MCF 10A (cell line): ENCODE measurements at regions of chr20 and their contacts with region 1.

Region 1: GRCh38 chr20:38985603-38986170 is 23.5 kb downstream of the DHX35 start:
- DNase-seq: peak; percentile 6
- H3K4me3 Mint-ChIP-seq: no peak overlapping the region
- H3K27ac Mint-ChIP-seq: peak overlapping the region; percentile 59
- H3K4me1 Mint-ChIP-seq: peaks cover 15% of the 10 kb centered on the region
- H3K27me3 Mint-ChIP-seq: no peaks in the 10 kb centered on the region
- CTCF ChIP-seq: no peak

Region 2: DNA sequence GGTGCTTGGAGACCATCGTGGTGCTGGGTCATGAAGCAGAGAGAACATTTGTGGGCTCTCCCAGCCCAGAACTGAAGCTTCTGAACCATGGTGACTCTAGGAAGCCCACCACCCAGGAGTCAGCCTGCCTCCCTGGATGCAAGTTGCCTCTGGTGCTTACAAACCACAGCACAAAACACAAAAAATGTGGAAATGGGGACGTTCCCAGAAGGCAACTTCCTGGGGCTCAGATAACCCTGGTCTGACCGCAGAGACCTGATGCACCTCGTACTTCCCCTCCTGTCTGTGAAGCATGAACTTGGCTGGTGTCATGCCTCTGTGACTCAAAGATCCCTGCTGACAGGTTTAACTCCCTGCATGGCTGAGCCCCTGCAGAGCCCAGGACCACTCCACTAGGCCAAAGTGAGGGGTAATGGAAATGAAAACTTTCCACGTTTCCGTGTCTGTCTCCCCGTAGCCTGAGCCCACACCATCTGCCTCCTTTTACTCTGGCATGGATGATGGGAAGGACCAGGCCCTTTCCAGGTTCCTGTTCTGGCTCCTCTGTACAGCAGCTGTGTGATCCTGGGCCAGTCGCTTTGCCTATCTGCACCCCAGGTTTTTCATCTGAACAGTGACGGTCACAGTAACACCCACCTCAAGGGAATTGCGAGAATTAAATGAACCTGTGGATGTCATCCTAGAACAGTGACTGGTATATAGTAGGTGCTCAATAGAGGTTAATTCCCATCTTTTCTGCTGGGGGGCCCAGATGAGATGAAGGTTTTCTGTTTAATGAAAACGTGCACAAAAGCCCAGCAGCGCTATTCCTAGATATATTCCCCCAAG is 122.4 kb before region 1 on chr20:
- CTCF ChIA-PET with region 1: no interaction called
- POLR2A ChIA-PET with region 1: no interaction called
- intact Hi-C with region 1: no loop called
- DNase-seq: no peak
- H3K4me3 Mint-ChIP-seq: no peak overlapping the region
- H3K27ac Mint-ChIP-seq: no peak overlapping the region
- H3K4me1 Mint-ChIP-seq: no peaks in the 10 kb centered on the region
- H3K27me3 Mint-ChIP-seq: no peaks in the 10 kb centered on the region
- CTCF ChIP-seq: no peak

Region 3: DNA sequence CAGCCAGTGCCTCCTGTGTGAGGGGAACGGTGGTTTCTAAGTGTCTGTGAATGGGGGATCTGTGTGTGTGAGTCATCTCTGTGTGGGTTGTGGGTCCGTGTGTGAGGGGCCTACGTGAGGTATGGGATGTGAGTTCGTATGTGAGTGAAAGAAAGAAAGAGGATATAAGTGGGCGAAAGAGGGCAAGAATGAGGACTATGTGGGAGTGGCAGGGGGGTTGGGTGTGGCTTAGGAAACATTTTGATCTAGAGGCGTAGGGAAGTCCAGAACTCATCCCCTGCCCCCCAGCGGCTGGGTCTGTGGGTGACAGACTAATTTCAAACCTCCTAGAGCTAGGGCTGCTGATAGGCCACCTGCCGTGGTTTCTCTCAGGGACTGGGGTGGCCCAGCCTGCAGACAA is 11.9 kb after region 1 on chr20:
- CTCF ChIA-PET with region 1: interaction called, 3 read pairs
- POLR2A ChIA-PET with region 1: interaction called, 13 read pairs
- intact Hi-C with region 1: no loop called
- DNase-seq: no peak
- H3K4me3 Mint-ChIP-seq: no peak overlapping the region
- H3K27ac Mint-ChIP-seq: no peak overlapping the region
- H3K4me1 Mint-ChIP-seq: peaks cover 5% of the 10 kb centered on the region
- H3K27me3 Mint-ChIP-seq: no peaks in the 10 kb centered on the region
- CTCF ChIP-seq: no peak